Activated B cell treated with CpG ODN at 0.5 μM for 24 hours (primary cell): ENCODE measurements at regions of chr6 and their contacts with region 1.

Region 1: GRCh38 chr6:34027445-34027936 is 118.4 kb downstream of the GRM4 start:
- DNase-seq: peak; percentile 57
- ATAC-seq: peak; percentile 65
- H3K4me3 Mint-ChIP-seq: no peak overlapping the region
- H3K27ac Mint-ChIP-seq: no peak overlapping the region
- H3K4me1 Mint-ChIP-seq: peaks cover 5% of the 10 kb centered on the region
- H3K27me3 Mint-ChIP-seq: peaks cover 5% of the 10 kb centered on the region
- CTCF ChIP-seq: no peak

Region 2: DNA sequence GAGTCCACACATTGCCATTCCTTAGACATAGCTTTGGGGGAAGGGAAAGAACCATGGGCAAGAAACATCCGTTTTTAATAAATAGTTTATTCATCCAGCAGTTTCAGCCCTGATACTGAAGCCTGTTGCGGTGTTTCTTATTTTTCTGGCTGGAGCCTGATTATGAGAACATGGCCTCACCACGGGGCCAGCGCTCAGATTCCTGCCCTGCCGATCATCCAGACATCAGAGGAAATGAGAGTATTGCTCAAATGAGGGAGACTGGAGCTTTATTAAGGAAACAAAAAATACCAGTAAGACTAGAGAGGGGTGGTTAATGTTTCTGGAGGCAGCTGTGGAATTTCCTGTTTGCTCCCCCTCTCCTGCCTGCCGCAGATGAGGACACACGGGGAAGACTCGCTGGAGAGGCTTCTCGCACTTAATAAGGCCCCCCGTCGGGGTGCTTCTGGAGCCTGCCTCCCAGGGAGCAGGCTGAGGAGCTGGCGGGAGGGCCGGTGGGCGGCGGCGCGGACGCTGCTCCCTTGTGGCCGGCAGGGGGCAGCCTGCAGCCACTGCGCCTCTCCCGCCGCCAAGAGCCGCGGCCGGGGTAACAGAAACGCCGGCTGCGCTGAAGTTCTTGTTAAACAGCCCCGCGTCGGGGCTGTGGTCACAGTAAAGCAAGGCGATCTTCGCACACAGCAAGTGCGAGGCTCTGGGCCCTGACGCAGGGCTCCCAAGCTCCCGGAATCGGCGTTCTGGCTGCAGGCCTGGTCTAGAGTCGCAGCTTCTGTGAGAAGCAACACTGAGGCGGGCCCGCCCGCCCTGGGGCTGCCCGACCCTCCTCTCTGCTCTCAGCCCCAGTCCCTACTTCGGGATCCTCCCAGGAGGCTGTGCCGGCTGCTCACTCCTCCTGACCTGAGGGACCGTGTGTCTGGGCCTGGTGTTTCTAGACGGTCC is 256.1 kb before region 1 on chr6:
- CTCF ChIA-PET with region 1: interaction called, 45 read pairs
- POLR2A ChIA-PET with region 1: no interaction called
- intact Hi-C with region 1: no loop called
- DNase-seq: peak; percentile 65
- ATAC-seq: peak; percentile 78
- H3K4me3 Mint-ChIP-seq: no peak overlapping the region
- H3K27ac Mint-ChIP-seq: no peak overlapping the region
- H3K4me1 Mint-ChIP-seq: peaks cover 5% of the 10 kb centered on the region
- H3K27me3 Mint-ChIP-seq: peaks cover 14% of the 10 kb centered on the region
- CTCF ChIP-seq: peak; percentile 91